Activated CD4-positive, alpha-beta T cell treated with anti-CD3 and anti-CD28 coated beads, Interleukin-2, amount 10 ng/mL, durations not matched to agents 24 days and 14 days (primary cell): ENCODE measurements at regions of chr11 and their contacts with region 1.

Region 1: DNA sequence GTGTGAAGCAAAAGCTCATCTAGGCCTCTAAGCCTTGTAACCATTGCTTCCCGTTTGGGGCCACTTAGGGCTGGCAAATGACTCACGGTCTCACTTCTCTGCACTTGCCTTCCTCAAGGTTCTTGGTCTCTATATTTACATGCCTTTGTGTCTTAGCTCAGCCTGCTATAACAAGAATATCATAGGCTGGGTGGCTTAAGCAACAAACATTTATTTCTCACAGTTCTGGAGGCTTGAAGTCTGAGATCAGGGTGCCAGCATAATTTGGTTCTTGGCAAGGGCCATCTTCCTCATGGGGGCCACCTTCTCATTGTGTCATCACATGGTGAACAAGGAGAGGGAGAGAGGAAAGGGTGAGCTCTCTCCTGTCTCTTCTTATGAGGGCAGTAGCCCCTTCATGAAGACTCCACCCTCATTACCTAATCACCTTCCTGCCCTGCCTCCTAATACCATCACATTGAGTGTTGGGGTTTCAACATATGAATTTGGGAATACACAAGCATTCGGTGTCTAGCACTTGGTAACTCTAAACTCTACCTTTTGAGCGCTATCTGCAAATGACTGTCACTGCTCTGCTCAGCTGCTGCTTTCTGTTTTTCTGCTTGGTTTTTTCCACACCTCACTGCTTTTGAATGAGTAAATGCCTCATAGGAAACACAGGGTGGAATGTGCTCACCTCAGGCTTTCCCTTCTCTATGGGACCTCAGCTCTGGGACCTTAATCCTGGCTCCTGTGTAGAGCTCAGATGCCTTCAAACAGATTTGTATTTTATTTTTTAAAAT is 16.2 kb upstream of the ME3 start:
- DNase-seq: peak; percentile 63
- H3K4me3 Mint-ChIP-seq: peak overlapping the region; percentile 43
- H3K27ac Mint-ChIP-seq: peak overlapping the region; percentile 87
- H3K4me1 Mint-ChIP-seq: peaks cover 16% of the 10 kb centered on the region
- H3K27me3 Mint-ChIP-seq: no peaks in the 10 kb centered on the region

Region 2: DNA sequence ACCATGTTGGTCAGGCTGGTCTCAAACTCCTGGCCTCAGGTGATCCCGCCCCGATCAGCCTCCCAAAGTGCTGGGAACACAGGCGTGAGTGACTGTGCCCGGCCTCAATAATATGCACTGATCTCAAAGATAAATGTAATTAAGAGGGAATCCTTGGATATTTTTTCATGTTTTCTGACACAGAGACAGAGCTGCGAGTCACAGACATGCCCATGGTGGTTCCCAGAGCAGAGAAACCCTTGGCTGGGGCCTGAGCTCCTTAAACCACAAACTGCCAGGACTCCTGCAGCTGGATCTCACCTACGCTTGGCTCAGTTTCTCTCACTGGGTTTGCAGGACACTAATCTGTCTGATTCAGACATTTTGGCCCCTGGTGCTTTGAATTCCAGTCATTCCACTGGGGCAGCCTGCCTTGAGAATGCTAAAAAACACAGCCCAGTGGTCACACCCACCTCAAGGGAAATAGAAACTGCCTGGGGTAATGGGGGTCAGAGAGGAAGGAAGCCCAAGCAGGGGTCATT is 191.3 kb before region 1 on chr11:
- intact Hi-C with region 1: no loop called
- DNase-seq: no peak
- H3K4me3 Mint-ChIP-seq: no peak overlapping the region
- H3K27ac Mint-ChIP-seq: no peak overlapping the region
- H3K4me1 Mint-ChIP-seq: peaks cover 3% of the 10 kb centered on the region
- H3K27me3 Mint-ChIP-seq: peaks cover 5% of the 10 kb centered on the region

Region 3: DNA sequence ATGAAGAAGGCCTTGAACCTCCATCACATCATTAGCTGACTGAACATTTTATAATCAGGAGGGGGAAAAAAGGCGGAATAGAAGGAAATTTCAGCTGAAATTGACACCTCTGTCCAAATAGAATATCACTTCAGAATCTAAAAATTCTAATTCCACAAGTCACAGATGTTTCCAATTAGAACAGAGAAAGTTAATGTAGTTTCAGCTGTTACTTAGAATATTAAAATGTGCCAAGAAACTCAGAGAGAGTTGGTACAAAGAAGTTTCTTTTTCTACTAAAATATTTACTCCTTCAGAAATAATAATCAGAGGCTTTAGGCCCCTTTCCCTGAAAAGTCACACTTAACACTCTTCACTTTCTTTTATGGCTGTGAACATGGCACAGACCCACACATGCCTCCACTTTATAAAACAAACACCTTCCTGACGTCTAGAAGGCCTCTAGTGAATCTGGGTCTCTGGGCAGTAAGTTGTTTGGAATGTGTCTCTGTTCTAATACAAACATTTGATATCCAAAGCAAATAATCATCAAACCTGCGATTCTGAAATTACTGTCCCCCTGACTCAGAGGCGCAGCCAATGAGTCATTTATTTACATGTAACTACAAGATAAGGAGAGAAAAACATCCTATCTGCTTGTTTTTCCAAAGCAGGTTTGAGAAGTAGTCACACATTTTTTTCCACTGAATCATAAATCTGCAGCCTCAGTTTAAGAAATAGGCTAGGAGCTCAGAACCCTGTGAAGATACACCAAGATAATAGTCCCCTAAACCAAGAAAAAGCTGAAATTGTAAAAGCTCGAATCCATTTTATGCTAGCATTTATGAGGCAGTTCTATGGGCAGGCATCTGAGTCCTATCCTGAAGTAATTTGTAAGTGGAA is 164.6 kb before region 1 on chr11:
- intact Hi-C with region 1: loop called (anchors 5 kb)
- DNase-seq: no peak
- H3K4me3 Mint-ChIP-seq: peak overlapping the region; percentile 35
- H3K27ac Mint-ChIP-seq: peak overlapping the region; percentile 88
- H3K4me1 Mint-ChIP-seq: peaks cover 28% of the 10 kb centered on the region
- H3K27me3 Mint-ChIP-seq: no peaks in the 10 kb centered on the region

Region 4: GRCh38 chr11:86632499-86633269 is 55.9 kb before region 1 on chr11:
- intact Hi-C with region 1: loop called (anchors 5 kb)
- DNase-seq: peak; percentile 76
- H3K4me3 Mint-ChIP-seq: no peak overlapping the region
- H3K27ac Mint-ChIP-seq: peak overlapping the region; percentile 20
- H3K4me1 Mint-ChIP-seq: peaks cover 30% of the 10 kb centered on the region
- H3K27me3 Mint-ChIP-seq: peaks cover 23% of the 10 kb centered on the region

Region 5: DNA sequence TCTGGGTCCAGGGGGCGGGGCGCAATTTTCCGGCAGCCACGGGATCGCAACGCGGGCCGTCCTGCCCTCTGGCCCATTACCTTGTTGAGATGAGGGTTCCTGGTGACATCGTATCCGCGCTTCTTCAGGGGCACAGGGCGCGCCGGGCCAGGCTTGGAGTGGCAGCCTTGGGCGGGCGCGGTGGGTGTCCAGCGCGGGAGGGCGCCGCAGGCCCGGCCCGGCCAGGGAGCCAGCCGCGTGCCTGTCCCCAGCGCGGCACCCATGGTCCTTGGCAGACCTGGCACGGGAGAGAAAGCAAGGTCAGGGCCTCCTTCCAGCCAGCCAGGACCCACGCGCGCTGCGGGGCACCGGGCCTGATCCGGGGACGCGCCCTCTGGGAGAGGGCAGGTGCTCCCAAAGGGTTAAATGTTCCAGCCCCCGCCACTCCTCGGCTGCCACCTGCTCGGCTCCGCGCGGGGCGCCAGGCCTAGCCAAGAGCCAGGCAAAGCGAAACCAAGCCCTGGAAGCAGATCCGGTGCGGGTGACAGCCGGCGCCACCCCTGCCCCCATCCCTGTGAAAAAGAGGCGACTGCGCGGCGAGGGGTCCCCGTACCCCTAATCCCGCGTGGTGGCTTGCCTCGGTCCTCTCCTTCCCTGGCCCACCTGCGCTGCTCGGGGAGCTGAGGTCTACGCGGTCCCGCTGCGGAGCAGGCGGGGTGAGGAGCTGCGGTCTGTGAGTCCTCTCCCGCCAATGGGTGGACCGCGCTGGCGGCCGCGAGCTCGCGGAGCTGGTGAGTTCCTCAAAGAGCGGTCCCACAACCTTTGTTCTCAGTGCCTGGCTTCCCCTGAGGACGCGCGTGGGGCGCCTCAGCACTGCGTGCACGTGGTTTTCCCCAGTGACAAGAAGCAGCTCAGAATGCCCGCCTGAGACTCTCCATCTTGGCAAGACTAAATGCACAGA is 16.6 kb before region 1 on chr11 and contains the start of gene ME3:
- intact Hi-C with region 1: loop called (anchors 2 kb)
- DNase-seq: peak; percentile 86
- H3K4me3 Mint-ChIP-seq: peak within 1 kb of the TSS; percentile 76
- H3K27ac Mint-ChIP-seq: peak within 1 kb of the TSS; percentile 63
- H3K4me1 Mint-ChIP-seq: peaks cover 12% of the 10 kb centered on the region
- H3K27me3 Mint-ChIP-seq: peaks cover 34% of the 10 kb centered on the region
- total RNA-seq, gene ME3: 12.2 and 12.9 TPM in 2 replicates